Cardiac septum (tissue), 1 donor: ENCODE measurements at regions of chr1 and their contacts with region 1.

Region 1: GRCh38 chr1:52726265-52727113 is at the start of gene ZYG11B:
- DNase-seq: peak; percentile 97
- total RNA-seq, gene ZYG11B: 47.6 TPM

Region 2: DNA sequence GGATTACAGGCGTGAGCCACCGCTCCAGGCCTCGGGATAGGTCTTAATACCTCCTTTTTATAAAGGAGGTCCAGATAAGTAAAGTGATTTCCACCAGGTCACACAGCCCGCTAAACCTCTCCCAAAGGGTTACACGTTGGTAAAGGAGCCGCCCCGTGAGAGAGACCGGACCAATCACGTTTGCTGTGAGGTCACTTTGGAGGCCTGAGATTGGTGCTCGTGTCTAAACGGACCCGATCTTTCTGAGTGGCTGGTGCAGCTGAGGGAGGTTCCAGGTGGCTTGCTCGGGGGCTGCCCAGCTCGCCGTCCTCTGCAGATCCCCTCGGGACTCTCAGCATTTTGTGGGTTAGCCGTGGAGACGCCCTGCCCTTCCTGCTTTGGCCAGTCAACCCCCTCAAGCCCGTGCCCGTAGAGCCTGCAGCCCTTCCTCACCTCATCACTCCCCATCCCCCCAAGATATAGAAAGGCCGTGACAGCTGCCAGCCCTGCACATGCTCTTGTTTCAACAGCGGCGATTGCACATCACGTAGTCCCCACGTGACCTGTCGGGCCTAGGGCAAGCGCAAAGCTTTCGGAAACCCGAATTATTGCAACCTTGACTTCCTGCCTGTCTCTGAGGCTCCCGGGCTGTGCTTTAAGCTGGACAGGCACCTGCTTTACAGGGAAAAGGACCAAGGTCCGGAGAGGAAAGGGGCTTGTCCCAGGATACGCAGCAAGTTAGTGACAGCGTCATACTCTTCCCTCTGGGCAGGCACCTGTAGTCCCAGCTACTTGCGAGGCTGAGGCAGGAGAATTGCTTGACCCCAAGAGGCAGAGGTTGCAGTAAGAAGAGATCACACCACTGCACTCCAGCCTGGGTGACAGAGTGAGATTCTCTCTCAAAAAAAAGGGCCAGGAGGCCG is 23.4 kb before region 1 on chr1:
- intact Hi-C with region 1: loop called (anchors 2 kb)
- DNase-seq: peak; percentile 96

Region 3: GRCh38 chr1:52927212-52928014 is 200.9 kb after region 1 on chr1 and contains the start of gene SCP2:
- intact Hi-C with region 1: loop called (anchors 2 kb)
- DNase-seq: peak; percentile 91
- total RNA-seq, gene SCP2: 124 TPM